Caco-2 (cell line): ENCODE measurements at regions of chr6 and their contacts with region 1.

Region 1: GRCh38 chr6:73520688-73521350 is at the start of gene EEF1A1:
- DNase-seq: peak; percentile 99 to 100
- H3K4me3 ChIP-seq: peak within 1 kb of the TSS; percentile 76
- H3K4me3 Mint-ChIP-seq: peak within 1 kb of the TSS; percentile 81
- H3K27ac Mint-ChIP-seq: peak within 1 kb of the TSS; percentile 98
- H3K4me1 ChIP-seq: peaks cover 8% of the 10 kb centered on the region
- H3K4me1 Mint-ChIP-seq: peaks cover 11% of the 10 kb centered on the region
- H3K27me3 ChIP-seq: no peaks in the 10 kb centered on the region
- H3K27me3 Mint-ChIP-seq: no peaks in the 10 kb centered on the region
- CTCF ChIP-seq: no peak
- total RNA-seq, gene EEF1A1: 9,246 and 9,491 TPM in 2 replicates

Region 2: DNA sequence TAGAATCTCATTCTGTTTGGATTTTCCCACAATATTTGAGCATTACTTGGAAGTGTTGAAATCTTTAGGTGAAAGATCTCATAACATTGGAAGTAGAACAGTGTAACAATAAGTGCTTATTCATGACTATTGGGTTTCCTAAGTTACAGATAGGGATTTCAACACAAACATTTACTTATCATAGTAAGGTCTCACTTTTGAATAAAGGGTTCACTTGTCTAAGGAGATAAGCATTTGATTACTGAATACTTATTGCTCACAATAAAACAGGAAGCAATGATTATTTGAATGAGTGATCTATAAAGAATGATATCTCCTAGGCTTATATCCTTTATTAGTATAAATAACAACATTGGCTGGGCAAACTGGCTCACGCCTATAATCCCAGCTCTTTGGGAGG is 111.4 kb before region 1 on chr6:
- CTCF ChIA-PET with region 1: no interaction called
- POLR2A ChIA-PET with region 1: no interaction called
- intact Hi-C with region 1: no loop called
- DNase-seq: no peak
- H3K4me3 ChIP-seq: no peak overlapping the region
- H3K4me3 Mint-ChIP-seq: no peak overlapping the region
- H3K27ac Mint-ChIP-seq: no peak overlapping the region
- H3K4me1 ChIP-seq: no peaks in the 10 kb centered on the region
- H3K4me1 Mint-ChIP-seq: no peaks in the 10 kb centered on the region
- H3K27me3 ChIP-seq: no peaks in the 10 kb centered on the region
- H3K27me3 Mint-ChIP-seq: no peaks in the 10 kb centered on the region
- CTCF ChIP-seq: no peak

Region 3: GRCh38 chr6:73461537-73462350 is 59.1 kb before region 1 on chr6 and contains the start of gene MTO1:
- CTCF ChIA-PET with region 1: no interaction called
- POLR2A ChIA-PET with region 1: interaction called, 10 read pairs
- intact Hi-C with region 1: no loop called
- DNase-seq: peak; percentile 83 to 87
- H3K4me3 ChIP-seq: peak within 1 kb of the TSS; percentile 81
- H3K4me3 Mint-ChIP-seq: peak within 1 kb of the TSS; percentile 96
- H3K27ac Mint-ChIP-seq: peak within 1 kb of the TSS; percentile 97
- H3K4me1 ChIP-seq: no peaks in the 10 kb centered on the region
- H3K4me1 Mint-ChIP-seq: no peaks in the 10 kb centered on the region
- H3K27me3 ChIP-seq: no peaks in the 10 kb centered on the region
- H3K27me3 Mint-ChIP-seq: no peaks in the 10 kb centered on the region
- CTCF ChIP-seq: no peak
- total RNA-seq, gene MTO1: 28.7 and 33.1 TPM in 2 replicates

Region 4: DNA sequence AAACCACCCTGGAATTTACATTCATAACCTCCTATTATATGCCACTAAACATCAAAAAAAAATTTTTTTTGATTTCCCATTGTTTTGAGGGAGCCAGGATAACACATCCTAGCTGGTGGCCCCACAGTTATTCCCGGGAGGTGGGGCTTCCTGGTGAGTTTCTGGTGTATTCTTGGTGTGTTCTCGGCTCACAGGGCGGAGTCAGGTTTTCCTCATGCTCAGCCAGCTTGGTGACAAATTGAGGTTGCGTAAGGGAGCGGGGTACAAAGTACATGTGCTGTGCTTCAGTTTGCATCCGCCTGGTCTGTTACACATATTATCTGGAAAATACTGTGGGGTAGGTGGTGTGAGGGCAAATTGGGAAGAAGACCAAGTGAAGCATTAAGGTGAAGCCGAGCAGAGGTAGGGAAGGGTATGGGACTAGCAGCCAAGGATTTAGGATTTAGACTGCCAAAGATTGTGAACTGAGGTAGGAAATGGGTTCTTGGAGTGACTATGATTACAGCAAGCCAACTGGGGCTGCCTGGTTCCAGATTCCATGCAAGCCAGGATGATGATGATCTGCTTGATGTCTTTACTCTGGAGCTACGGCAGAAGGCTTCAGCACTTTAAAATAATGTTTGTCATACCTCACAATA is 46.3 kb after region 1 on chr6:
- CTCF ChIA-PET with region 1: interaction called, 5 read pairs
- POLR2A ChIA-PET with region 1: interaction called, 70 read pairs
- intact Hi-C with region 1: loop called (anchors 1 kb)
- DNase-seq: peak; percentile 89 to 94
- H3K4me3 ChIP-seq: no peak overlapping the region
- H3K4me3 Mint-ChIP-seq: peak overlapping the region; percentile 66
- H3K27ac Mint-ChIP-seq: peak overlapping the region; percentile 89
- H3K4me1 ChIP-seq: peaks cover 54% of the 10 kb centered on the region
- H3K4me1 Mint-ChIP-seq: peaks cover 21% of the 10 kb centered on the region
- H3K27me3 ChIP-seq: no peaks in the 10 kb centered on the region
- H3K27me3 Mint-ChIP-seq: no peaks in the 10 kb centered on the region
- CTCF ChIP-seq: no peak

Region 5: GRCh38 chr6:73585566-73586415 is 65.0 kb after region 1 on chr6:
- CTCF ChIA-PET with region 1: interaction called, 4 read pairs
- POLR2A ChIA-PET with region 1: interaction called, 38 read pairs
- intact Hi-C with region 1: loop called (anchors 1 kb)
- DNase-seq: peak; percentile 54 to 65
- H3K4me3 ChIP-seq: no peak overlapping the region
- H3K4me3 Mint-ChIP-seq: peak overlapping the region; percentile 60
- H3K27ac Mint-ChIP-seq: peak overlapping the region; percentile 95
- H3K4me1 ChIP-seq: peaks cover 16% of the 10 kb centered on the region; the same call in 1 of the 2 replicates
- H3K4me1 Mint-ChIP-seq: peaks cover 22% of the 10 kb centered on the region
- H3K27me3 ChIP-seq: no peaks in the 10 kb centered on the region
- H3K27me3 Mint-ChIP-seq: no peaks in the 10 kb centered on the region
- CTCF ChIP-seq: no peak

Region 6: GRCh38 chr6:73653571-73654424 is 133.0 kb after region 1 on chr6 and contains the start of gene SLC17A5:
- CTCF ChIA-PET with region 1: interaction called, 4 read pairs
- POLR2A ChIA-PET with region 1: interaction called, 19 read pairs
- intact Hi-C with region 1: loop called (anchors 1 kb)
- DNase-seq: peak; percentile 94
- H3K4me3 ChIP-seq: peak within 1 kb of the TSS; percentile 85
- H3K4me3 Mint-ChIP-seq: peak within 1 kb of the TSS; percentile 87
- H3K27ac Mint-ChIP-seq: peak within 1 kb of the TSS; percentile 96
- H3K4me1 ChIP-seq: peaks cover 25% of the 10 kb centered on the region
- H3K4me1 Mint-ChIP-seq: peaks cover 12% of the 10 kb centered on the region
- H3K27me3 ChIP-seq: no peaks in the 10 kb centered on the region
- H3K27me3 Mint-ChIP-seq: no peaks in the 10 kb centered on the region
- CTCF ChIP-seq: no peak
- total RNA-seq, gene SLC17A5: 13.0 TPM in 2 replicates